Left colon (tissue), 2 donors: ENCODE measurements at regions of chr5 and their contacts with region 1.

Region 1: GRCh38 chr5:14108170-14108996 is 34.8 kb upstream of the TRIO start:
- DNase-seq: peak; percentile 50 to 70
- ATAC-seq: peak; percentile 81

Region 2: GRCh38 chr5:14270209-14270702 is 161.9 kb after region 1 on chr5:
- intact Hi-C with region 1: loop called in 1 of 2 experiments (anchors 5 kb)
- DNase-seq: no peak
- ATAC-seq: peak; percentile 79